IMR-90 (cell line): ENCODE measurements at regions of chr4 and their contacts with region 1.

Region 1: GRCh38 chr4:98963538-98964433 is 31.7 kb upstream of the METAP1 start:
- DNase-seq: no peak
- ATAC-seq: peak; percentile 56
- H3K4me3 ChIP-seq: no peak overlapping the region
- H3K27ac ChIP-seq: no peak overlapping the region
- H3K4me1 ChIP-seq: peaks cover 3% of the 10 kb centered on the region; the same call in 1 of the 2 replicates
- H3K27me3 ChIP-seq: no peaks in the 10 kb centered on the region; the same call in 1 of the 2 replicates
- CTCF ChIP-seq: no peak
- POLR2A ChIP-seq: no peak
- RAD21 ChIP-seq: no peak

Region 2: GRCh38 chr4:98945297-98945850 is 18.4 kb before region 1 on chr4:
- CTCF ChIA-PET with region 1: no interaction called
- POLR2A ChIA-PET with region 1: no interaction called
- dilution Hi-C with region 1: no loop called
- in situ Hi-C with region 1: no loop called
- intact Hi-C with region 1: loop called (anchors 2 kb)
- DNase-seq: no peak
- ATAC-seq: no peak
- H3K4me3 ChIP-seq: no peak overlapping the region
- H3K27ac ChIP-seq: no peak overlapping the region
- H3K4me1 ChIP-seq: peaks cover 2% of the 10 kb centered on the region; the same call in 1 of the 2 replicates
- H3K27me3 ChIP-seq: no peaks in the 10 kb centered on the region
- CTCF ChIP-seq: no peak
- POLR2A ChIP-seq: no peak
- RAD21 ChIP-seq: no peak